ENCODE measurements at regions of chr12 and their contacts with region 1.

Region 1: GRCh38 chr12:99619389-99620158 is 28.0 kb upstream of the GARIN6 start:
- DNase-seq: no peak
- CTCF ChIP-seq: peak; percentile 88

Region 2: DNA sequence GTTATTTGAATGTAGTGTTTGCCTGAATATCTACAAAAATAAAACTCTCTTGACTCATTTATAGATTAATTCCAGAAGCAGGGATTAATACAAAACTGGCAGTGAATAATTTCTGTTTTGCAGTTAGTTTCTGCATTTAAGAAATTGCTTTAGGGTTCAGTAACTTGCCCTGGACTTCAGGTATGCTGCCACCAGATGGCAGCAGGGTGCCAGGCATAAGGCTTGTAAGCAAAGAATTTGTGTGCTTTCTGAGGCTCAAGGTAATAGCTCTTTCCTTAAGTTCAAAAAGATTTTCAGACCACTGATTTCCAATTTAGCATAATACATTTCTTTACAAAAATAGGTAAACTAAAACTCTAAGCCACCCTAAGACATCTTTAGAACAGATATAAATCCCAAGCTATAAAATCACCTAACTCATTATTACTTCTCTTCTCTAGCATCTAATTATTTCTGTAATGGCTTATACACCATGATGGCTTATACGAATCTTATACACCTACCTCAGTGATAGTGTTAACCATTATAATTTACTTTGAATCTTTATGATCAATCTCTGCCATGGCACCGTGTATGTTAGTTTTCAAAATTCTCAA is 576.2 kb before region 1 on chr12:
- in situ Hi-C with region 1: loop called (anchors 25 kb)
- DNase-seq: peak; percentile 52
- CTCF ChIP-seq: peak; percentile 90

Region 3: DNA sequence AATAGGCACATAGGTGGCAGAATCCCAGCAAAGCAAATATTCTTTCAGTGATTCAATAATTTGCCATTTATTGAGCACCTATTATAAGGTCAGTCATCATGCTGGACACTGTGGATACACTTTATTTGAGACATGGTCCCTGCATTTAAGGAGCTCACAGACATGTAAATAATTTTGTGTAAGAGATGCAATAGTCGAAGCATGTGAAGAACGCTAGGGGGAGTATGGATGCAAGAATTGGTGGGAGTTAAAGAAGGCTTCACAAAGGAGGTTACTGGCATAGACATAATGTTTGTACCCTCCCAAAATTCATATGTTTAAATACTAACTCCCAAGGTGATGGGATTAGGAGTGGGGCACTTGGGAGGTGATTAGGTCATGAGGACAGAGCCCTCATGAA is 232.7 kb before region 1 on chr12:
- in situ Hi-C with region 1: loop called (anchors 25 kb)
- DNase-seq: peak; percentile 18
- CTCF ChIP-seq: peak; percentile 70

Region 4: GRCh38 chr12:99911967-99912366 is 292.4 kb after region 1 on chr12:
- in situ Hi-C with region 1: no loop called
- DNase-seq: peak; percentile 4
- CTCF ChIP-seq: no peak

Region 5: DNA sequence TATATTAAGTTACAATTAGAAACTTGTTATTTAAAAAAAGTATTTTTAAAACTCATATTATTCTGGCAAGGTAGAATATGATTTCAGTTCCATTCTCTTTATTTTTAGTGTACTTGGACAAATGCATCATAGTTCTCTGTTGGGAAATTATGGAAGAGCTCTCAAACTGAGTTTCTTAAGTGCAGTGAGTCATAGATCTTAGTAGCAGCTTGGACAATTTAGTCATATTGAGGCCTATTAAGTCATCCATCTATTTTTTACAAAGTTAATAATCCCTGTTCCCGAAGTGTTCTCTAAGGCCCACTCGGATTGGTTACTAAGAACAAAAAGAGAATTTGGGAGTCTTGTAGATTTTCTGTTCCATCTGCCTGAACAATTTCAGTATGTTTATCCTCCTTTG is 1288.9 kb after region 1 on chr12:
- in situ Hi-C with region 1: no loop called
- DNase-seq: no peak
- CTCF ChIP-seq: no peak